Sigmoid colon (tissue), 7 donors: ENCODE measurements at regions of chr3 and their contacts with region 1.

Region 1: DNA sequence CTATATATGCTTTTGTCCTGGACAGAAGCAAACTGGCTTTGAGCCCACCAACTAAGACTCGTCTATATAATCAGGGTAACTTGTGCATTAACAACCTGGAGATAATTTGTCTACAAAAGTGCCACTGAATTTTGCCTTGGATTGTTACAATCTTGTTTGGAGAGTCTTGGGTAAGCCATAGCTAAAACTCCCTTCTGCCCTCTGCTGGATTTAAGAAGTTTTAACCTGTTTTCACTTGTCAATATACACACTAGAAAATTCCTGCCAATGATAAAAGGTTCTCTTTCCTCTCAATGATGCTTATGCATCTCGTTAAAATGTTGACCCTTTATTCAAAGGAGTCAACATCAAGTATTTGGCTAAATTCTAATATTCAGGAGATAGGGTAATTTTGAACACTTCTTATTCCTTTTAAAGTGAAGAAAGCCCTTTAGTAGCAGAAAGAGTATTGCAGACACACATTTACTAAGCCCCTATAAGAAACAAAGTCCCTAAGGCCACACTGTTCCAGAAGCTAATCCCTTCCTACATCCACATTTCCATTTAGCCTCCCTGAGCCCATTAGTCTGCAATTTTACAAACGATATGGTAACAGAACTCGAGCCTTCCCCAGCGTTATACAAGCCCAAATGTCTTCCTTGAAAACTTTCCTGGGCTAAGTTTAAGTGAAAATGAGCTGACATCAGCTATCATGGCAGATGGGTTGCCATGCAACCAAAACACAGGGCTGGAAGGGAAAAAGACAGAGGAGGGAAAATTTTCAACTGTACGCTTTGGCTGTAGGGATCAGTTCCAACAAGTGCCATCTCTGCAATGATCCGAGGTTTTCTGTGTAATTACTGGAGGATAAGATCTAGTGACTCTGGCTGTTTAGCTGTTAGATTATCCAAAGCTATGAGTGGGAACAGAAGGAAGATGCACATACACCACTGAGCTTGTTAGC is 75.9 kb upstream of the FGF12 start:
- DNase-seq: no peak
- H3K4me3 ChIP-seq: no peak overlapping the region
- H3K27ac ChIP-seq: no peak overlapping the region
- H3K4me1 ChIP-seq: no peaks in the 10 kb centered on the region
- H3K27me3 ChIP-seq: no peaks in the 10 kb centered on the region
- CTCF ChIP-seq: peak in 3 of 4 experiments; percentile 15 to 53 (median 30)
- EP300 ChIP-seq: no peak
- POLR2A ChIP-seq: no peak

Region 2: DNA sequence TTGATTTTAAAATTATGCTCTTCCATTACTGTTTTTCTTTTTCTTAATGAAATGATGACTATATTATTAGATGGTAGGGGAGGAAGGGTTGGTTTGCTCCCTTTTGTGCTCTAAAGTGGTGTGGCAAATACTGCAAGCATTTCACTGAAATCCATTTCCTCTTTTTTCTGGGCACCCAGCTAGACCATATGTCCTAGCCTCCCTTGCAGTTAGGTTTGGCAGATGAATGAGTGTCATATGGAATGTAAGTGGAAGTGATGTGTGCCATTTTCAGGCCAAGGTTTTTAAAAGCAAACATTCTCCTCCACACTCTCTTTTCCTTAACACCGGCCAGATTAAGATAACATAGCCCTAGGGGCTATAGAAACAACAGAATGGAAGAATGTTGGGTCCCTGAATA is 438.9 kb before region 1 on chr3:
- intact Hi-C with region 1: no loop called
- DNase-seq: no peak
- H3K4me3 ChIP-seq: no peak overlapping the region
- H3K27ac ChIP-seq: no peak overlapping the region
- H3K4me1 ChIP-seq: peaks cover 0 to 4% (median 0%) of the 10 kb centered on the region in 4 donors
- H3K27me3 ChIP-seq: no peaks in the 10 kb centered on the region
- CTCF ChIP-seq: no peak
- EP300 ChIP-seq: no peak
- POLR2A ChIP-seq: no peak

Region 3: DNA sequence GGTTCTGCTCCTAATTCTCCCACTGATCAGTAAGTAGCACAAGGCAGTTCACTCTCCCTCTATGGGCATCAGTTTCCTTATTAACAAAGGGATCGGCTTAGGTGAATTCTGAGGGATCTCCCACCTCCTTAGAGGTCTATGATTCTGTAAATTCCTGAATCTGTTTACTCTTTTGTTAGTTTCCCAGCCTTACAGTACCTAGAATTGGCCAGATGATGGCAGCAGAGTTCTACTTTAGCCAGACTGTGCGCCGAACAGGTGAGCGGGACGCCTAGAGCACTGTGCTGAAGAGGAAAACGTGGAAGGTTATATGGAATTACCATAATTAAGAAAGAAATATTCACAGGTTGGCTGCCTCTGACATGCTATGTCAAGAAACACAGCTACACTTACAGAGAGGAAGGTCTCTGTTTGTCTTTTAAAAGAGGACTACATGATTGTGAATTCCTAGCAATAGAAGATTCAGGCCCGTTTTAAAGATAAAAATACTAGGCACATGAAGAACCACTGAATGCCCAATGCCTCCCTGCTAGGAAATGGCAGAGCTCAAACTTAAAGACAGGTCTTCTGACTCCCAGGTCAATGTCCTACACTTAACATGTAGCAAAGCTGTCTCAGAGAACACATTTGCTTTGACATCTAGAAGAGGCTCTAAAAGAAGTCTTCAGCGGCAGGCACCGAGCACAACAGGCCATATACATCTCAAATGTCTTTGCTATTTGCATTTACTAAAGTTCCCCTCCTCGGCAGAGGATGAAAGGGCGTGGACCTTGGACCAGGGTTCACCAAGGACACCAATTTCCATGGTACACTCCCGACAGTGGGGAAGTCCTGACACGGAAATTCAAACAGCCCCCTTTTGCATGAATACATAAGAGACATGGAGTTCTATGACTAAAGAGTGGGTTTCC is 335.7 kb before region 1 on chr3:
- intact Hi-C with region 1: loop called (anchors 10 kb)
- DNase-seq: no peak
- H3K4me3 ChIP-seq: no peak overlapping the region
- H3K27ac ChIP-seq: no peak overlapping the region
- H3K4me1 ChIP-seq: no peaks in the 10 kb centered on the region
- H3K27me3 ChIP-seq: peaks cover 0 to 15% (median 0%) of the 10 kb centered on the region in 3 donors
- CTCF ChIP-seq: peak; percentile 15 to 80 (median 65)
- EP300 ChIP-seq: no peak
- POLR2A ChIP-seq: no peak

Region 4: GRCh38 chr3:192566706-192567290 is 236.4 kb before region 1 on chr3:
- intact Hi-C with region 1: loop called (anchors 2 kb)
- DNase-seq: peak; percentile 76
- H3K4me3 ChIP-seq: no peak overlapping the region
- H3K27ac ChIP-seq: no peak overlapping the region
- H3K4me1 ChIP-seq: peaks cover 0 to 7% (median 5%) of the 10 kb centered on the region in 4 donors
- H3K27me3 ChIP-seq: no peaks in the 10 kb centered on the region
- CTCF ChIP-seq: peak; percentile 43 to 70 (median 50)
- EP300 ChIP-seq: no peak
- POLR2A ChIP-seq: no peak

Region 5: GRCh38 chr3:192957441-192958021 is 154.3 kb after region 1 on chr3:
- intact Hi-C with region 1: no loop called
- DNase-seq: peak; percentile 79
- H3K4me3 ChIP-seq: no peak overlapping the region
- H3K27ac ChIP-seq: peak overlapping the region; percentile 4 to 66 (median 29)
- H3K4me1 ChIP-seq: no peaks in the 10 kb centered on the region
- H3K27me3 ChIP-seq: no peaks in the 10 kb centered on the region
- CTCF ChIP-seq: no peak
- EP300 ChIP-seq: peak in 1 of 4 donors; percentile 21
- POLR2A ChIP-seq: no peak